T-cell (primary cell): ENCODE measurements at regions of chr2 and their contacts with region 1.

Region 1: GRCh38 chr2:212193056-212193455 is 345.5 kb downstream of the ERBB4 start:
- DNase-seq: no peak
- ATAC-seq: no peak
- H3K4me3 ChIP-seq: no peak overlapping the region
- H3K4me3 Mint-ChIP-seq: no peak overlapping the region
- H3K27ac ChIP-seq: no peak overlapping the region
- H3K27ac Mint-ChIP-seq: no peak overlapping the region
- H3K4me1 ChIP-seq: no peaks in the 10 kb centered on the region
- H3K4me1 Mint-ChIP-seq: no peaks in the 10 kb centered on the region
- H3K27me3 ChIP-seq: no peaks in the 10 kb centered on the region
- H3K27me3 Mint-ChIP-seq: no peaks in the 10 kb centered on the region

Region 2: GRCh38 chr2:211055438-211055837 is 1137.6 kb before region 1 on chr2:
- CTCF ChIA-PET with region 1: interaction called in 1 of 2 experiments, 11 read pairs
- POLR2A ChIA-PET with region 1: no interaction called
- DNase-seq: no peak
- ATAC-seq: no peak
- H3K4me3 ChIP-seq: no peak overlapping the region
- H3K4me3 Mint-ChIP-seq: no peak overlapping the region
- H3K27ac ChIP-seq: no peak overlapping the region
- H3K27ac Mint-ChIP-seq: no peak overlapping the region
- H3K4me1 ChIP-seq: no peaks in the 10 kb centered on the region
- H3K4me1 Mint-ChIP-seq: no peaks in the 10 kb centered on the region
- H3K27me3 ChIP-seq: no peaks in the 10 kb centered on the region
- H3K27me3 Mint-ChIP-seq: no peaks in the 10 kb centered on the region